ENCODE measurements at regions of chr4 and their contacts with region 1.

Region 1: DNA sequence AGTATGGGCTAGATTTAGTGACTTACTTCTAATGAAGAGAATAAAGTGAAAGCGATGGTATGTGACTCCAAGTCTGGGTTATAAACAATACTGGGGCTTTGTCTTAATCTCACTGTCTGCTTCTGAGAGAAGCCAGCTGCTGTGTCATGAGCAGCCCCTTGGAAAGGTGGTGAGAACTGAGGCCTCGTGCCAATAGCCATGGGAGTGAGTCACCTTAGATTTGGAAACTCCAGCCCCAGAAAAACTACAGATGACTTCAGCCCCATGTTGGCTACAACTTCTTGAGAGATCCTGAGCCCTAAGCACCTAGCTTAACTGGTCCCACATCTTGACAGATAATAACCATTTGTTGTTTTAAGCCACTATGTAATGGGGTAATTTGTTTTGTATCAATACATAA is 77.6 kb downstream of the CWH43 start:
- DNase-seq: no peak
- ATAC-seq: no peak
- H3K4me3 ChIP-seq: no peak overlapping the region
- H3K27ac ChIP-seq: no peak overlapping the region
- H3K4me1 ChIP-seq: no peaks in the 10 kb centered on the region
- H3K27me3 ChIP-seq: no peaks in the 10 kb centered on the region
- CTCF ChIP-seq: no peak
- POLR2A ChIP-seq: no peak
- RAD21 ChIP-seq: no peak

Region 2: DNA sequence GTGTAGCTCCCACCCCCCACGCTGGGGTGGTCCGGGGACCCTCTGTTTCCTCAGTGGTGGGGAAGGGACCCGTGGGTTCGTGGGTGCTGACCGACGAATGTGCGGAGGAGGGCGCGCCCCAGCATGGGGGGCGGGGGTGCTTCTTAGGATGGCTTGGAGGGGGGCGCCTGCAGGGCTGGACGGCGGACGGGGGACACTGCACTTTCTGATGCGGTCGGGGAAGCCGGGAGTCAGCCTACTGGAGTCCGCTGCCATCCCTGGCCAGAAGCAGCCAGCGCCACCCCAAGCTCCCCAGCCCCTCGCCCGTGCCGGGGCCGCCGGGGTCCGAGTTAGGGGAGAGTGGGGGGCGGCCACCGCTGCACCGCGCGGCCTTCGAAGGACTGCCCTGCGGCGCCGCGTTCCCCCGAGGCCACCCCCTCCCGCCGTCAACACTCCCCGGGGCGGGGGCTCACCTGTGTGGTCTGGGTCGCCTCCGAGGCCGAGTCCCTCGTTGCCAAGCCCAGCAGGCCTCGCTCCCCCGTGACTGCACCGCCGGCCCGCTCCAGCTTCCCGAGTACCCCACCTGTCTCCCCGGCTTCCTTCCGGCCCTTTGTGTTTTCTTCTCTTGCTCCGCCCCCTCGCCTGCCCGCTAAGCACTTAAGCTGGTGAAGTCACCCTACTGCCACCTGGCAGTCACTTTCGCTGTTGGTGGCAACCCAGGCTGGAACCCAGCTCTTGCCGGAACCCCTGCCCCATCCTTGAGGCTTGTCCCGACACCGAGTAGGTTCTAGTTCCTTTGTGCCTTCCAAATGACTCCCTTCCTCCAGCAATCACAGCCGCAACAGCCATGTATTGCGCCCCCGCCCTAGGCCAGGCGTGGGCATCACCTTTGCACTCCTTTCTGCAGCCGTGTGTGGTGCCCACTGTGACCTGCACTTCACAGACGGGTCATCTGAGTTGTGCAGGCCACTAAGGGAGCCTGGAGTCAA is 157.2 kb before region 1 on chr4 and contains the start of gene OCIAD2:
- CTCF ChIA-PET with region 1: no interaction called
- POLR2A ChIA-PET with region 1: no interaction called
- RAD21 ChIA-PET with region 1: no interaction called
- intact Hi-C with region 1: no loop called
- DNase-seq: peak; percentile 55
- ATAC-seq: peak; percentile 82
- H3K4me3 ChIP-seq: peak within 1 kb of the TSS; percentile 78 to 84
- H3K27ac ChIP-seq: peak within 1 kb of the TSS; percentile 70; the same call in 1 of the 2 replicates
- H3K4me1 ChIP-seq: peaks cover 18 to 46% of the 10 kb centered on the region in 2 experiments
- H3K27me3 ChIP-seq: no peaks in the 10 kb centered on the region
- CTCF ChIP-seq: peak in 2 of 3 experiments; percentile 27 to 33; a peak in 3 of 6 replicates
- POLR2A ChIP-seq: no peak
- RAD21 ChIP-seq: peak; percentile 51; the same call in 1 of the 2 replicates
- total RNA-seq, gene OCIAD2: 64.0 TPM

Region 3: DNA sequence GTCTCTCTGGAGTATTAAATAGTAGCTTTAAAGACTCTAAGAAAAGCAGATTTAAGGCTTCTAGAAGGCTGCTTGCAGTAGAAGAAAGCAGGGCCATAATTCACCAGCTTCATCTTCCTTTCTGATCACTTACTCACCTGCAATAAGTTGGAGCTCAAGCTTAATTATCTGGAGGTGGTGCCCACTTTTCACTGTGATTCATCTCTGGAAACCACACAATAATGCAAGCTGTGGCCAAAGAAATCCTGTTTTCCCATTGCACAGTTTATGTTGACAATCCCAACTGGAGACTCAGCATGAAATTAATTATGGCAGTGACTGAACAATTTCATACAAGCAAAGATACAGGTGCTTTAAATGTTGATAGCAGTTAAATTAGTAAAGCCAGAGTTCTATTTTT is 62.9 kb before region 1 on chr4:
- CTCF ChIA-PET with region 1: no interaction called
- POLR2A ChIA-PET with region 1: no interaction called
- RAD21 ChIA-PET with region 1: no interaction called
- intact Hi-C with region 1: loop called (anchors 10 kb)
- DNase-seq: no peak
- ATAC-seq: no peak
- H3K4me3 ChIP-seq: no peak overlapping the region
- H3K27ac ChIP-seq: no peak overlapping the region
- H3K4me1 ChIP-seq: no peaks in the 10 kb centered on the region
- H3K27me3 ChIP-seq: peaks cover 20% of the 10 kb centered on the region
- CTCF ChIP-seq: no peak
- POLR2A ChIP-seq: no peak
- RAD21 ChIP-seq: no peak